H1 (cell line): ENCODE measurements at regions of chr7 and their contacts with region 1.

Region 1: GRCh38 chr7:73606801-73607691 is 17.3 kb downstream of the MLXIPL start:
- DNase-seq: peak in 1 of 2 experiments; percentile 97
- H3K4me3 ChIP-seq: peak overlapping the region in 3 of 4 experiments; percentile 11 to 61 (median 26); a peak in 5 of 8 replicates
- H3K27ac ChIP-seq: no peak overlapping the region
- H3K4me1 ChIP-seq: peaks cover 0 to 7% (median 4%) of the 10 kb centered on the region in 4 experiments; a peak in 6 of 7 replicates
- H3K27me3 ChIP-seq: no peaks in the 10 kb centered on the region; a peak in 1 of 7 replicates
- CTCF ChIP-seq: peak; percentile 91 to 97 (median 92)
- EP300 ChIP-seq: no peak
- POLR2A ChIP-seq: no peak
- RAD21 ChIP-seq: peak; percentile 96 to 97

Region 2: DNA sequence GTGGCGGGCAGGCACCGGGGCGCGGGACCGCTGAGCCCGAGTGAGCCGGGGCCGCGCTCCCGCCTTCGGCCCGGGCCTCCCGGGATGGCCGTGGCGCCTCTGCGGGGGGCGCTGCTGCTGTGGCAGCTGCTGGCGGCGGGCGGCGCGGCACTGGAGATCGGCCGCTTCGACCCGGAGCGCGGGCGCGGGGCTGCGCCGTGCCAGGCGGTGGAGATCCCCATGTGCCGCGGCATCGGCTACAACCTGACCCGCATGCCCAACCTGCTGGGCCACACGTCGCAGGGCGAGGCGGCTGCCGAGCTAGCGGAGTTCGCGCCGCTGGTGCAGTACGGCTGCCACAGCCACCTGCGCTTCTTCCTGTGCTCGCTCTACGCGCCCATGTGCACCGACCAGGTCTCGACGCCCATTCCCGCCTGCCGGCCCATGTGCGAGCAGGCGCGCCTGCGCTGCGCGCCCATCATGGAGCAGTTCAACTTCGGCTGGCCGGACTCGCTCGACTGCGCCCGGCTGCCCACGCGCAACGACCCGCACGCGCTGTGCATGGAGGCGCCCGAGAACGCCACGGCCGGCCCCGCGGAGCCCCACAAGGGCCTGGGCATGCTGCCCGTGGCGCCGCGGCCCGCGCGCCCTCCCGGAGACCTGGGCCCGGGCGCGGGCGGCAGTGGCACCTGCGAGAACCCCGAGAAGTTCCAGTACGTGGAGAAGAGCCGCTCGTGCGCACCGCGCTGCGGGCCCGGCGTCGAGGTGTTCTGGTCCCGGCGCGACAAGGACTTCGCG is 172.9 kb before region 1 on chr7:
- CTCF ChIA-PET with region 1: no interaction called
- POLR2A ChIA-PET with region 1: no interaction called
- DNase-seq: peak; percentile 36 to 76
- H3K4me3 ChIP-seq: peak overlapping the region in 3 of 4 experiments; percentile 39 to 61 (median 44); a peak in 6 of 8 replicates
- H3K27ac ChIP-seq: no peak overlapping the region
- H3K4me1 ChIP-seq: peaks cover 0 to 10% (median 5%) of the 10 kb centered on the region in 4 experiments; a peak in 6 of 7 replicates
- H3K27me3 ChIP-seq: peaks cover 9 to 20% (median 18%) of the 10 kb centered on the region in 4 experiments
- CTCF ChIP-seq: no peak
- EP300 ChIP-seq: no peak
- POLR2A ChIP-seq: no peak
- RAD21 ChIP-seq: no peak

Region 3: GRCh38 chr7:73585196-73585595 is 21.9 kb before region 1 on chr7:
- CTCF ChIA-PET with region 1: interaction called, 74 read pairs
- POLR2A ChIA-PET with region 1: no interaction called
- DNase-seq: no peak
- H3K4me3 ChIP-seq: no peak overlapping the region
- H3K27ac ChIP-seq: no peak overlapping the region
- H3K4me1 ChIP-seq: no peaks in the 10 kb centered on the region
- H3K27me3 ChIP-seq: peaks cover 0 to 19% (median 10%) of the 10 kb centered on the region in 4 experiments; a peak in 4 of 7 replicates
- CTCF ChIP-seq: no peak
- EP300 ChIP-seq: no peak
- POLR2A ChIP-seq: no peak
- RAD21 ChIP-seq: no peak

Region 4: DNA sequence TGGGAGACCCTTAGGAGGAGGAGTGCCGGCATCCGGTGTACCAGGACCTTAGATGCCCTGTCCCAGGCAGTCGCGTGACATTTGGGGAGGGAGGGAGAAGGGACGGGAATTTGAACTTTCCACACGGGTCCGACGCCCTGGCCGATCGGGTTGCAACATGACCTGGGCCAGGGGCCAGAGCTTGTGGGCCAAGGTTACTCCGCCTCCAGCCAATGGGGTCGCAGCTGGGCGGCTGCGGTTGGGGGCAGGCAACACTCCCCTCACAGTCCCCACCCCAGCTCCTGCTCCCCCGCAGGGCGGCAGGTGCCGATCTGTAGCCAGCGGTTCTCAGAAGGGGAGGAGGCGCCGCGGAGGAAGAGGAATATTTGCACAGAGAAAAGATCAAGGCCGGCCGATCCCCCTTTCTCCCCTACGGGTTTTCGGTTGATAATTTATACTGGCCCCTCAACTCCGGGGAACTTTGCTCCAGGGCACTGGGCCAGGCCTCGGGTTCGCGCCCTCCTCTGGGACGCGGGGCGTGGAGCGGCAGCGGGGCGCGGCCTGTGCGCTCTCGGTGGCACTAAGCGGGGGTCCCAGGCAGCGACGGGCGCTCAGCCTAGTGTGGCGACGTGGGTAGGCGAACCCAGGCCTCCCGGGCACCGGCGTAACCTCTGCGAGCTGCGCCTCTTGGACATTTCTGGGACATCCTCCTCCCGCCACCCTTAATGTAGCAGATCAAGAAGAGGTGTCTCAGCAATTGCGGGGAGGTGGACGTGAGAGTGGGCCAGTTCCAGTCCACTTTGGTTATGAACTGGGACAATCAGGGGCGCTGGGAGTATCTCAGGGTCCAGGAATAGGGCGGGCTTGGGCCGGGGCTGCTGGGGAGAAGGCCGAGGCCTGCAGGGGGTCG is 16.1 kb after region 1 on chr7:
- CTCF ChIA-PET with region 1: interaction called, 136 read pairs
- POLR2A ChIA-PET with region 1: interaction called, 20 read pairs
- DNase-seq: peak; percentile 75 to 88
- H3K4me3 ChIP-seq: peak overlapping the region; percentile 48 to 86 (median 74)
- H3K27ac ChIP-seq: no peak overlapping the region
- H3K4me1 ChIP-seq: peaks cover 0 to 7% (median 5%) of the 10 kb centered on the region in 4 experiments; a peak in 6 of 7 replicates
- H3K27me3 ChIP-seq: peaks cover 0 to 12% (median 10%) of the 10 kb centered on the region in 4 experiments; a peak in 5 of 7 replicates
- CTCF ChIP-seq: 0 out of 4 replicates have a peak, but pooled peaks of 1 of the 3 experiments have one; percentile 1
- EP300 ChIP-seq: no peak
- POLR2A ChIP-seq: no peak
- RAD21 ChIP-seq: no peak

Region 5: DNA sequence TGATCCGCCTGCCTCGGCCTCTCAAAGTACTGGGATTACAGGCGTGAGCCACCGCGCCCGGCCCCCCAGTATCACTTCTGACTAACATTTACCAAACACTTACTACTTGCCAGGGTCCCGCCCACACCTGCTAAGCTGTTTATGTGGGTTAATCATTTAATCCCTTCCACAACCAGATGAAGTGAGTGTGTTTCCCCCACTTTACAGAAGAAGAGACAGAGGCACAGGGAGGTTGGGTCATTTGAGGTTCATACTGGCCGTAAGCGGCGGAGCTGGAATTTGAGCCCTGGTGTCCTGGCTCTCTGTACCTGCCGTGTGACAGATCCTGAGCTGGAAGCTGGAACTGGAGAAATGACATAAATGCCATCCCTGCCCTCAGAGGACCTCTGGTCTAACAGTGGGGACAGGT is 45.5 kb after region 1 on chr7:
- CTCF ChIA-PET with region 1: interaction called, 13 read pairs
- POLR2A ChIA-PET with region 1: interaction called, 3 read pairs
- DNase-seq: no peak
- H3K4me3 ChIP-seq: no peak overlapping the region
- H3K27ac ChIP-seq: no peak overlapping the region
- H3K4me1 ChIP-seq: peaks cover 0 to 5% (median 0%) of the 10 kb centered on the region in 4 experiments; a peak in 2 of 7 replicates
- H3K27me3 ChIP-seq: peaks cover 0 to 16% (median 16%) of the 10 kb centered on the region in 4 experiments; a peak in 6 of 7 replicates
- CTCF ChIP-seq: no peak
- EP300 ChIP-seq: no peak
- POLR2A ChIP-seq: no peak
- RAD21 ChIP-seq: no peak

Region 6: GRCh38 chr7:73701357-73701995 is 94.4 kb after region 1 on chr7:
- CTCF ChIA-PET with region 1: interaction called, 130 read pairs
- POLR2A ChIA-PET with region 1: interaction called, 4 read pairs
- DNase-seq: peak; percentile 53 to 92
- H3K4me3 ChIP-seq: no peak overlapping the region
- H3K27ac ChIP-seq: no peak overlapping the region
- H3K4me1 ChIP-seq: peaks cover 0 to 19% (median 15%) of the 10 kb centered on the region in 4 experiments; a peak in 6 of 7 replicates
- H3K27me3 ChIP-seq: no peaks in the 10 kb centered on the region; a peak in 1 of 7 replicates
- CTCF ChIP-seq: peak in 2 of 3 experiments; percentile 75 to 91; a peak in 3 of 4 replicates
- EP300 ChIP-seq: no peak
- POLR2A ChIP-seq: no peak
- RAD21 ChIP-seq: peak; percentile 65 to 66

Region 7: DNA sequence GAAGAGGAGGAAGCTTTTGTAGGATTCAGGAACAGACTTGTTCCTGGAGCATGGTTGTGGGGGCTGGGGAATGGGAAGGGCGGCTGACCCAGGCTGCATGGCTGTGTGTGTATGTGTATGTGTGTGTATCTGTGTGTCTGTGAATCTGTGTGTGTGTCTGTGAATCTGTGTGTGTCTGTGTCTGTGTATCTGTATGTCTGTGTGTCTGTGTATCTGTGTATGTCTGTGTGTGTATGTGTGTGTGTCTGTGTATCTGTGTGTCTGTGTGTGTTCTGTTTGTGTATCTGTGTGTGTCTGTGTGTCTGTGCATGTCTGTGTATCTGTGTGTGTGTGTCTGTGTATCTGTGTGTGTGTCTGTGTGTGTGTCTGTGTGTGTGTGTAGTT is 119.0 kb after region 1 on chr7:
- CTCF ChIA-PET with region 1: interaction called, 87 read pairs
- POLR2A ChIA-PET with region 1: interaction called, 3 read pairs
- DNase-seq: no peak
- H3K4me3 ChIP-seq: no peak overlapping the region
- H3K27ac ChIP-seq: no peak overlapping the region
- H3K4me1 ChIP-seq: no peaks in the 10 kb centered on the region
- H3K27me3 ChIP-seq: no peaks in the 10 kb centered on the region; a peak in 1 of 7 replicates
- CTCF ChIP-seq: no peak
- EP300 ChIP-seq: no peak
- POLR2A ChIP-seq: no peak
- RAD21 ChIP-seq: no peak